ENCODE measurements at regions of chr12 and their contacts with region 1.

Region 1: DNA sequence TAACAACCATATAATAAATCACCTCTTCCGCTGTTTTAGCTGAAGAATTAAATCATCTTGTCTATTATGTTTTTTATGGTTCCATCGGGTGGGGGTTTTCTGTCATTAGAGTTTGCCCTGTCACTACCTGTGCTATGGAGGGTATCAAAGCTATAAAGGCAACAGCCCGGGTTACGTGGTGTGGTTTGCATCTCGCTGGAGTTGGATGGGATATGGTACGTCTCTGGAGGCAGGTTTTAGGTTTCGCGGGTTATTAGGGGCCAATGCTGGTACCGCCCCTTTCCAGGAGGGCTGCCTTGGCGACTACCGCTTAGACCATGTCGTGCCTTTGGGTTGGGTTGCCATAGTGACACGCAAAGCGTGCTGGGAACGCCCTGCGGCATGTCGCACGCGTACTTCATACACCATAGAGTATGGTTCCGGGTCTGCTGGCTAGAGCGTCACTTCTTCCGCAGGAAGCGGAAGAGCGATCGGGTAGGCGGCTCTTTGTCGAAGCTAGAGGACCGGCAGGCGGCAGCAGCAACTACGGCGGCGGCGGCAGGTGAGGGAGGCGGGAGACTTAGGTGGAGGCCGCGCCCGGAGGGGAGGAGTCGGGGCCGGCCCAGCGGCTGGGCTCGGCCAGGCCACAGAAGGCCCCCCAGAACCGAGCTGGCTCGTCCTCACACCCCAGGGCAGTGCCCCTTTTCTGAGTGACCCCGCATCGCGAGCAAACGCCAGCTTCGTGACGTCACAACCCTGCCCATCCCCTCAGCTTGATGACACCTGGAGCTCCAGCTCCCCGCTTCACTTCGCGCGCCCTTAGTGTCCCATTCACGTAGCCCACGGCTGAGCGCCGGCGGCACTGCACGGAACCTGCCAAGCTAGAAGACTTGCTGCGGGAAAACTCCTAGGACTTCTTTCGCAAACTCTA is at the start of gene ZC3H10:
- DNase-seq: peak; percentile 99
- H3K4me3 Mint-ChIP-seq: peak within 1 kb of the TSS; percentile 99
- H3K27ac Mint-ChIP-seq: peak within 1 kb of the TSS; percentile 100
- H3K4me1 Mint-ChIP-seq: peaks cover 29% of the 10 kb centered on the region
- H3K27me3 Mint-ChIP-seq: no peaks in the 10 kb centered on the region
- total RNA-seq, gene ZC3H10: 5.1 to 7.2 TPM

Region 2: DNA sequence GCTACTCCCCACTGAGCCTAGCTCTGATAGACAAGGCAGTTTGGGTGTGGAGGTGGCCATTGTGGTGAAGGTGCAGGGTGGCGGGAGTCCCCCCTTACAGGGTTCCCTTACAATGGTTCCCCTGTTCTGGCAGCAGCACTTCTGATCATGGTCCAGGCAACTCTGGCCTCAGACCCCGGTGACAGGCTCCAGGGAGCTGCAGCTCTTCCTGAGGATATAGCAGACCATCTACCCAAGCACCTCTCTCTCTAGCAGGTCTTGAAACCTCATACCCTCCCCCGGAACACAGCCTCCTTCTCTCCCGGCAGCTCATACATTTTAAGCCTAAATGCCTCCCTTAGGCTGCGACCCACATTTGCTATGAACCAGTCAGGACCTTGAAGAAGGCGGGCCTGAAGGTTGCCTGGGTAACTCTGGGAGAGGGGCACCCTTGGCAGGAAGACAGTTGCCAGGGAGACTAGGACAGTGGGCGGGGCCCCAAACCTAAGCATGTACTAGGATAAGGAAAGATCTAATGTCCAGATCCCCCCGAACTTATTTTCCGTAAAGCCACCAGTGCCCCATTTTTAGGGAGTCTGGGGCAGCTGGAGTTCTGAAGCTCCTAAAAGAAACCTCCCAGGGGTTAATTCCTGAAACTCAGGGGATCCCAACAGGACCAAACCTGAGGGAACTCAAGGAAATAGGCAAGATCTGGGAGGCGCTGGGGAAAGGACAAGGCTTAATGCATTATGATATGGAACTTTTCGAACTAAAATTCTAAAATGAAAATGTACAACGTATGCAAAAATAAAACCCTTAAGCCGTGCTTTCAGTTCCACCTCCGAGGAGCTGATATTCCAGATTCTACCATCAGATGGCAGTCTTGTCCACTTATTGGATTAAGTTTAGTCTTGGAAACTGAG is 379.7 kb before region 1 on chr12:
- CTCF ChIA-PET with region 1: interaction called, 6 read pairs
- POLR2A ChIA-PET with region 1: interaction called, 6 read pairs
- intact Hi-C with region 1: loop called (anchors 2 kb)
- DNase-seq: peak; percentile 87
- H3K4me3 Mint-ChIP-seq: peak overlapping the region; percentile 77
- H3K27ac Mint-ChIP-seq: peak overlapping the region; percentile 85
- H3K4me1 Mint-ChIP-seq: peaks cover 21% of the 10 kb centered on the region
- H3K27me3 Mint-ChIP-seq: no peaks in the 10 kb centered on the region

Region 3: GRCh38 chr12:56020423-56021184 is 97.4 kb before region 1 on chr12 and contains the start of gene IKZF4:
- CTCF ChIA-PET with region 1: no interaction called
- POLR2A ChIA-PET with region 1: no interaction called
- intact Hi-C with region 1: no loop called
- DNase-seq: peak; percentile 41
- H3K4me3 Mint-ChIP-seq: peak within 1 kb of the TSS; percentile 83
- H3K27ac Mint-ChIP-seq: peak within 1 kb of the TSS; percentile 80
- H3K4me1 Mint-ChIP-seq: peaks cover 32% of the 10 kb centered on the region
- H3K27me3 Mint-ChIP-seq: no peaks in the 10 kb centered on the region
- total RNA-seq, gene IKZF4: 14.4 to 15.1 TPM

Region 4: GRCh38 chr12:56041552-56042429 is 76.2 kb before region 1 on chr12 and contains the start of gene RPS26:
- CTCF ChIA-PET with region 1: interaction called, 11 read pairs
- POLR2A ChIA-PET with region 1: interaction called, 5 read pairs
- intact Hi-C with region 1: loop called (anchors 1 kb)
- DNase-seq: peak; percentile 95
- H3K4me3 Mint-ChIP-seq: peak within 1 kb of the TSS; percentile 98
- H3K27ac Mint-ChIP-seq: peak within 1 kb of the TSS; percentile 98
- H3K4me1 Mint-ChIP-seq: peaks cover 47% of the 10 kb centered on the region
- H3K27me3 Mint-ChIP-seq: no peaks in the 10 kb centered on the region
- total RNA-seq, gene RPS26: 28.1 to 40.7 TPM

Region 5: DNA sequence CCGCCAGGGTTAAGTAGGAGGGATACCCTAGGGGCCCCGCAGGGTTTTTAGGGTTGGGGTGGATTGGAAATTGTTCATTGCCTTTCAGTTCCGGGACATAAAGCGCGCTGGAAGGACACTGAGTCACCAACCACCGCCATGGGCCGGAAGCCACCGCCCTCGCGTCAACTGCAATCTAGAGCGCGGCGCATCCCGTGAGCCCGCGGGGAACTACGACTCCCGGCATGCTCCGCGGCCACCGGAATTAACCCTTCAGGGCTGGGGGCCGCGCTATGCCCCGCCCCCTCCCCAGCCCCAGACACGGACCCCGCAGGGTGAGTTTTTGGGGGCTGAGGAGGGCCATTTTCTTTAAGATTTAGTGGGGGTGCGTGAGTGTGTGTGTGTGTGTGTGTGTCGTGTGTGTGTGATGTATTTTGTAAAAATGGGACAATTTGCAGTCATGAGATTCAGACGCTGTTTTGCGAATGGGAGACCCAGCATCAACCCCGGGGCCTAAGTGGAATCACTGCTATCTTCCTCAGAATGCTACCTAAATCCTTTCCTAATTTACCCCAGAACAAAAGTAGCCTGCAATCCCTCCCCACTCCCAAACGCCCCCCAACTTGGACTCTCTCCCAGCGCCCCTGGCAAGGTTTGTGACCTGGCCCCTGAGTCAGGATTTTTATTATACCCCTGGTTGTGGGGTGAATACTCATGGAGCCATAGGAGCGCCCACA is 34.4 kb after region 1 on chr12 and contains the start of gene MYL6B:
- CTCF ChIA-PET with region 1: interaction called, 15 read pairs
- POLR2A ChIA-PET with region 1: interaction called, 6 read pairs
- intact Hi-C with region 1: loop called (anchors 1 kb)
- DNase-seq: peak; percentile 97
- H3K4me3 Mint-ChIP-seq: peak within 1 kb of the TSS; percentile 78
- H3K27ac Mint-ChIP-seq: peak within 1 kb of the TSS; percentile 96
- H3K4me1 Mint-ChIP-seq: peaks cover 34% of the 10 kb centered on the region
- H3K27me3 Mint-ChIP-seq: no peaks in the 10 kb centered on the region
- total RNA-seq, gene MYL6B: 63.8 to 70.8 TPM

Region 6: GRCh38 chr12:56258057-56258819 is 140.2 kb after region 1 on chr12 and contains the start of gene ANKRD52:
- CTCF ChIA-PET with region 1: interaction called, 14 read pairs
- POLR2A ChIA-PET with region 1: interaction called, 5 read pairs
- intact Hi-C with region 1: loop called (anchors 1 kb)
- DNase-seq: peak; percentile 82
- H3K4me3 Mint-ChIP-seq: peak within 1 kb of the TSS; percentile 87
- H3K27ac Mint-ChIP-seq: peak within 1 kb of the TSS; percentile 81
- H3K4me1 Mint-ChIP-seq: peaks cover 19% of the 10 kb centered on the region
- H3K27me3 Mint-ChIP-seq: no peaks in the 10 kb centered on the region
- total RNA-seq, gene ANKRD52: 34.1 to 37.0 TPM

Region 7: DNA sequence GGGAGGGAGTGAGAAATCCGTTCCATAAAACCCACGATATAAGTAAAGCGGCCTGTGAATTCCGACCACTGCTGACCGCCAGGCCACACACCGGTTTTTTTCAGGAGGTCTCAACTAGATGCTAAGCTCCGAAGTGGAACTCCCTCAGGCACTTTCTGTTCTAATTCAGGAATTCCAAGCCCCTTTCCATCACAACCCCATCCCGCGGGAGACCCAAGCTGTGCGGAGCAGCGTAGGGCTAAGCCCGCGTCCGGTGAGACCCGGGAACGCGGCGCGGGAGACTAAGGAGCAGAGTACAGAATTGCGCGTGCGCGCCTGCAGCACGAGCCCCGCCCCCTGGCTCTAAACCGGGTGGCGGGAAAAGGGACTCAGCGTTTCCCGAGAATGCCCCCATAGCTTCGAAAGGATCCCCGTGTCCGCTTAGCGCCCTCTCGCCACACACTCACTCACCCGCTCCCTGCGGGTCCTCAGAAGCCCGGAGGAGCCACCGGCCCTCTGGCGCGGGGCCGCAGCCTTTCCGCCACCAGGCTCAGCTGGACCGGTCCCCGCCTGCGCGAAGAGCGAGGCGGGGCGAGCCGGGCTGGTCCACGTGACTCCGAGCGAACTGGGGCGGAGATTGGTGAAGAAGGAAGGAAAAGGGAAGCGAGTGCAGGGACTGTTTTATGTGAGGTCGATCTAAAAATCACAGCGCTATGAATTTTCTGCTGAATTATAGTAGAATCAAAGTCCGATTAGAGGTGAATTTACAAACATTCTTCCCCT is 331.0 kb after region 1 on chr12 and contains the start of gene TIMELESS:
- CTCF ChIA-PET with region 1: interaction called, 3 read pairs
- POLR2A ChIA-PET with region 1: interaction called, 3 read pairs
- intact Hi-C with region 1: loop called (anchors 5 kb)
- DNase-seq: peak; percentile 92
- H3K4me3 Mint-ChIP-seq: peak within 1 kb of the TSS; percentile 88
- H3K27ac Mint-ChIP-seq: peak within 1 kb of the TSS; percentile 93
- H3K4me1 Mint-ChIP-seq: peaks cover 18% of the 10 kb centered on the region
- H3K27me3 Mint-ChIP-seq: no peaks in the 10 kb centered on the region
- total RNA-seq, gene TIMELESS: 60.1 to 62.6 TPM